CD8-positive, alpha-beta T cell (primary cell): ENCODE measurements at regions of chr2 and their contacts with region 1.

Region 1: DNA sequence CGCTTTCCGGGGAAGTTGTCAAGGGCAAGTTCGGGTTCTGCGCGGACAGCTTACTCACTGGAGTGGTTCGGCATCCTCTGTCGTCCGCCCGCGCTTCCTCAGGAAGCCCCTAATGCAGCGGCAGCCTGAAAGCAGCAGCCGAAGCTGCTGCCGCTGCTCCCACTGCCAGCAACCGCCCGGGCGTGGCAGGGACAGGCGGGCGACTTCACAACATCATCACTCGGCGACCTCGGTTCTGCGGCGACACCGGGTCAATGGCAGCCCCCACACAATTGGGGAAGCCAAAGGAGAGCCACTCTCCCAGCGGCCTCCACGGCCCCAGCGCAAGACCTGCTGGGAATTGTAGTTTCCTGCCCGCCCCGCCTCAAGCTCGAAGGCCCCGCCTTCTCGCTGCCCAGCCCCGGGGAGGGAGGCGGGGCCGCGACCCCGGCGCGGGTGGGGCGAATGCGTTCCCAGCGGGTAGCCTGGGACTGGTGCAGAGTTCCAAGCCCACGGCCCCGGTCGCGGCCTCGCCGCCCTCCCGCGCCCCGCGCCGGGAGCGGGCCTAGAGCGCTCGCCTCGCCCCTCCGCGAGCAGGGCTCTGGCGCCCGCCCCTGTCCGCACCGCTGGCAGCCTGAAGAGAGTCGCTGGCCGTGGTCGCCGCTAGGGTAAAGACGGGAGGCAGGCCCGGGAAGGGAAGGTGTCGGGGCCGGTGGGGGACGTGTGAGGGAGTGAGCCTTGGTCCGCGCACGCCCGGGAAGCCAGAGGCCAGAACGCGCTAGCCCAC is at the starts of genes STRADB and TRAK2:
- DNase-seq: peak; percentile 89 to 98 (median 95)
- ATAC-seq: peak; percentile 89
- H3K4me3 ChIP-seq: peak within 1 kb of the TSS; percentile 64 to 79
- H3K4me3 Mint-ChIP-seq: peak within 1 kb of the TSS; percentile 96
- H3K27ac ChIP-seq: peak within 1 kb of the TSS; percentile 74 to 79
- H3K27ac Mint-ChIP-seq: peak within 1 kb of the TSS; percentile 95
- H3K4me1 ChIP-seq: peaks cover 41% of the 10 kb centered on the region
- H3K4me1 Mint-ChIP-seq: peaks cover 59% of the 10 kb centered on the region
- H3K27me3 ChIP-seq: no peaks in the 10 kb centered on the region
- H3K27me3 Mint-ChIP-seq: no peaks in the 10 kb centered on the region
- CTCF ChIP-seq: no peak
- total RNA-seq, gene STRADB: 4.5 to 5.8 TPM
- total RNA-seq, gene TRAK2: 20.1 to 22.5 TPM

Region 2: GRCh38 chr2:200864176-200864976 is 587.1 kb before region 1 on chr2 and contains the start of gene CLK1:
- CTCF ChIA-PET with region 1: no interaction called
- POLR2A ChIA-PET with region 1: interaction called, 6 read pairs
- intact Hi-C with region 1: loop called in 1 of 2 experiments (anchors 1 kb)
- DNase-seq: peak; percentile 94 to 99 (median 98)
- ATAC-seq: peak; percentile 78
- H3K4me3 ChIP-seq: peak within 1 kb of the TSS; percentile 84 to 98
- H3K4me3 Mint-ChIP-seq: peak within 1 kb of the TSS; percentile 96
- H3K27ac ChIP-seq: peak within 1 kb of the TSS; percentile 98 to 100
- H3K27ac Mint-ChIP-seq: peak within 1 kb of the TSS; percentile 100
- H3K4me1 ChIP-seq: peaks cover 29% of the 10 kb centered on the region
- H3K4me1 Mint-ChIP-seq: peaks cover 43% of the 10 kb centered on the region
- H3K27me3 ChIP-seq: no peaks in the 10 kb centered on the region
- H3K27me3 Mint-ChIP-seq: no peaks in the 10 kb centered on the region
- CTCF ChIP-seq: no peak
- total RNA-seq, gene CLK1: 1,353 to 1,404 TPM

Region 3: GRCh38 chr2:201182650-201183364 is 268.7 kb before region 1 on chr2 and contains the start of gene CASP10:
- CTCF ChIA-PET with region 1: interaction called, 3 read pairs
- POLR2A ChIA-PET with region 1: no interaction called
- intact Hi-C with region 1: loop called in 1 of 2 experiments (anchors 5 kb)
- DNase-seq: peak in 5 of 9 experiments; percentile 17 to 89 (median 23)
- ATAC-seq: peak; percentile 87
- H3K4me3 ChIP-seq: peak within 1 kb of the TSS; percentile 57 to 60
- H3K4me3 Mint-ChIP-seq: peak within 1 kb of the TSS; percentile 94
- H3K27ac ChIP-seq: peak within 1 kb of the TSS; percentile 58 to 78
- H3K27ac Mint-ChIP-seq: peak within 1 kb of the TSS; percentile 95
- H3K4me1 ChIP-seq: peaks cover 25% of the 10 kb centered on the region
- H3K4me1 Mint-ChIP-seq: peaks cover 45% of the 10 kb centered on the region
- H3K27me3 ChIP-seq: no peaks in the 10 kb centered on the region
- H3K27me3 Mint-ChIP-seq: no peaks in the 10 kb centered on the region
- CTCF ChIP-seq: peak; percentile 48
- total RNA-seq, gene CASP10: 9.8 to 10.4 TPM

Region 4: GRCh38 chr2:201383156-201383555 is 68.3 kb before region 1 on chr2:
- CTCF ChIA-PET with region 1: no interaction called
- POLR2A ChIA-PET with region 1: no interaction called
- intact Hi-C with region 1: no loop called
- DNase-seq: no peak
- ATAC-seq: no peak
- H3K4me3 ChIP-seq: no peak overlapping the region
- H3K4me3 Mint-ChIP-seq: no peak overlapping the region
- H3K27ac ChIP-seq: no peak overlapping the region
- H3K27ac Mint-ChIP-seq: no peak overlapping the region
- H3K4me1 ChIP-seq: no peaks in the 10 kb centered on the region
- H3K4me1 Mint-ChIP-seq: no peaks in the 10 kb centered on the region
- H3K27me3 ChIP-seq: no peaks in the 10 kb centered on the region
- H3K27me3 Mint-ChIP-seq: no peaks in the 10 kb centered on the region
- CTCF ChIP-seq: no peak

Region 5: GRCh38 chr2:201490291-201490690 is 38.8 kb after region 1 on chr2:
- CTCF ChIA-PET with region 1: no interaction called
- POLR2A ChIA-PET with region 1: no interaction called
- intact Hi-C with region 1: no loop called
- DNase-seq: no peak
- ATAC-seq: no peak
- H3K4me3 ChIP-seq: no peak overlapping the region
- H3K4me3 Mint-ChIP-seq: no peak overlapping the region
- H3K27ac ChIP-seq: no peak overlapping the region
- H3K27ac Mint-ChIP-seq: no peak overlapping the region
- H3K4me1 ChIP-seq: no peaks in the 10 kb centered on the region
- H3K4me1 Mint-ChIP-seq: no peaks in the 10 kb centered on the region
- H3K27me3 ChIP-seq: no peaks in the 10 kb centered on the region
- H3K27me3 Mint-ChIP-seq: no peaks in the 10 kb centered on the region
- CTCF ChIP-seq: no peak

Region 6: GRCh38 chr2:201642579-201643215 is 191.2 kb after region 1 on chr2:
- CTCF ChIA-PET with region 1: interaction called, 3 read pairs
- POLR2A ChIA-PET with region 1: interaction called, 21 read pairs
- intact Hi-C with region 1: loop called (anchors 1 kb)
- DNase-seq: peak; percentile 65 to 91 (median 83)
- ATAC-seq: peak; percentile 86
- H3K4me3 ChIP-seq: peak overlapping the region; percentile 98 to 99
- H3K4me3 Mint-ChIP-seq: peak overlapping the region; percentile 90
- H3K27ac ChIP-seq: peak overlapping the region; percentile 89 to 99
- H3K27ac Mint-ChIP-seq: peak overlapping the region; percentile 96
- H3K4me1 ChIP-seq: no peaks in the 10 kb centered on the region
- H3K4me1 Mint-ChIP-seq: peaks cover 14% of the 10 kb centered on the region
- H3K27me3 ChIP-seq: no peaks in the 10 kb centered on the region
- H3K27me3 Mint-ChIP-seq: no peaks in the 10 kb centered on the region
- CTCF ChIP-seq: no peak

Region 7: DNA sequence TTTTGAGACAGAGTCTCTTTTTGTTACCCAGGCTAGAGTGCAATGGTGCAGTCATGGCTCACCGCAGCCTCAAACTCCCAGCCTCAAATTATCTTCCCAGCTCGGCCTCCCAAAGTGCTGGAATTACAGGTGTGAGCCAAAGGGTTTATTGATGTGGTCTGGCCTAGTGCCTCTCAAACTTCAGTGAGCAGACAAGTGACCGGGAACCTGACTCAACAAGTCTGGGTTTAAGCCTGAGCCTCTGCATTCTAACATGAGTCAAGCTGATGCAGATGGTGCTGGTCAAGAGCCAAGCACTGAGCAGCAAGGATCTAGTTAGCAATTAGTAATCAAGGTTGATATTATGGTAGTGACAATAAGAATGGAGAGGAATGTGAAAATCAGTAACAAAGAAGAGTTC is 376.1 kb after region 1 on chr2:
- CTCF ChIA-PET with region 1: no interaction called
- POLR2A ChIA-PET with region 1: no interaction called
- intact Hi-C with region 1: no loop called
- DNase-seq: no peak
- ATAC-seq: no peak
- H3K4me3 ChIP-seq: no peak overlapping the region
- H3K4me3 Mint-ChIP-seq: no peak overlapping the region
- H3K27ac ChIP-seq: no peak overlapping the region
- H3K27ac Mint-ChIP-seq: no peak overlapping the region
- H3K4me1 ChIP-seq: no peaks in the 10 kb centered on the region
- H3K4me1 Mint-ChIP-seq: no peaks in the 10 kb centered on the region
- H3K27me3 ChIP-seq: no peaks in the 10 kb centered on the region
- H3K27me3 Mint-ChIP-seq: peaks cover 9% of the 10 kb centered on the region
- CTCF ChIP-seq: no peak

Region 8: GRCh38 chr2:202375609-202376408 is 924.3 kb after region 1 on chr2 and contains the start of gene BMPR2:
- CTCF ChIA-PET with region 1: no interaction called
- POLR2A ChIA-PET with region 1: no interaction called
- intact Hi-C with region 1: loop called (anchors 5 to 10 kb)
- DNase-seq: peak; percentile 63 to 90 (median 81)
- ATAC-seq: peak; percentile 77
- H3K4me3 ChIP-seq: peak within 1 kb of the TSS; percentile 61 to 100
- H3K4me3 Mint-ChIP-seq: peak within 1 kb of the TSS; percentile 99
- H3K27ac ChIP-seq: peak within 1 kb of the TSS; percentile 64 to 80
- H3K27ac Mint-ChIP-seq: peak within 1 kb of the TSS; percentile 93
- H3K4me1 ChIP-seq: peaks cover 23% of the 10 kb centered on the region
- H3K4me1 Mint-ChIP-seq: peaks cover 30% of the 10 kb centered on the region
- H3K27me3 ChIP-seq: no peaks in the 10 kb centered on the region
- H3K27me3 Mint-ChIP-seq: no peaks in the 10 kb centered on the region
- CTCF ChIP-seq: no peak
- total RNA-seq, gene BMPR2: 9.4 to 9.6 TPM

Region 9: DNA sequence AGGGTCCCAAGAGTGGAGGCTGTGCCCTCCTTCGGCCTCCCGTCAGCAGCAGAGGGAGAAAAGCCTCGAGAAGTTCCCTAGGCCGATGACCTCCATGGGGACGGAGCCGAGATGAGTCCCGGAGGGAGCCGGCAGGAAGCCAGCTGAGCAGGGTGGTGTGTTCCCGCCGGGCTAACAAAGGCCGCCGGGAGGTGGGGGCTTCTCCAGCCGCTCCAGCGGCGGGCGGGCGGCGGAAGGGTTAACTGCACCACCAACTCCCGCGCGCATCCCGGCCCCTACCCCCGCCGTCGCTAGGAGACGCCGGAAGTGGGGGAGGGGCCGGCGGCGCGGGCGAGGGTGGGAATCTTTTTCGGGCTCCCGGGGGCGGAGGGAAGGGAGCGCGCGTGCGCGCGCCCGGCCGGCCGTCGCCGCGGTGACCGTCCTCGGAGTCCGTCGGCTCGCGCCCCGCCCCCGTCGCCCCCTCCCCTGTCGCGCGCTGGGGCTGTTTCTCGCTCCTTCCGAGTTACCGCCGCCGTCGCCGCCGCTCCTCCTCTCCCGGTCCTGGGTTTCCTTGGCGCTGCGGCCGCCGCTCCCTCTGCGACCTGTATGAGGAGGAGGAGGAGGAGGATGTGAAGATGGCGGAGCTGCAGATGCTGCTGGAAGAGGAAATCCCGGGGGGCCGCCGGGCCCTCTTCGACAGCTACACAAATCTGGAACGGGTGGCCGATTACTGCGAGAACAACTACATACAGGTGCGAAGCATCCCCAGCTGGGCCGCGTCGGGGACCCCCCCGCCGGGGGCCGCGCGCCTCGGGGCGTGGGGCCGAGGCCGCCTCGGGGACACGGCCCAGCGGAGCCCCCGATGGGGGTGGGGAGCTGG is 1876.7 kb after region 1 on chr2 and contains the start of gene ABI2:
- CTCF ChIA-PET with region 1: no interaction called
- POLR2A ChIA-PET with region 1: no interaction called
- intact Hi-C with region 1: loop called in 1 of 2 experiments (anchors 10 kb)
- DNase-seq: peak in 8 of 9 experiments; percentile 42 to 76 (median 66)
- ATAC-seq: peak; percentile 73
- H3K4me3 ChIP-seq: peak within 1 kb of the TSS; percentile 87 to 95
- H3K4me3 Mint-ChIP-seq: peak within 1 kb of the TSS; percentile 89
- H3K27ac ChIP-seq: peak within 1 kb of the TSS; percentile 52 to 78
- H3K27ac Mint-ChIP-seq: peak within 1 kb of the TSS; percentile 83
- H3K4me1 ChIP-seq: peaks cover 20% of the 10 kb centered on the region
- H3K4me1 Mint-ChIP-seq: peaks cover 34% of the 10 kb centered on the region
- H3K27me3 ChIP-seq: no peaks in the 10 kb centered on the region
- H3K27me3 Mint-ChIP-seq: no peaks in the 10 kb centered on the region
- CTCF ChIP-seq: no peak
- total RNA-seq, gene ABI2: 17.7 to 19.7 TPM